Activated CD4-positive, alpha-beta T cell treated with anti-CD3 and anti-CD28 coated beads, Interleukin-2, amount 10 ng/mL, durations not matched to agents 7 days and 5 days (primary cell): ENCODE measurements at regions of chr9 and their contacts with region 1.

Region 1: DNA sequence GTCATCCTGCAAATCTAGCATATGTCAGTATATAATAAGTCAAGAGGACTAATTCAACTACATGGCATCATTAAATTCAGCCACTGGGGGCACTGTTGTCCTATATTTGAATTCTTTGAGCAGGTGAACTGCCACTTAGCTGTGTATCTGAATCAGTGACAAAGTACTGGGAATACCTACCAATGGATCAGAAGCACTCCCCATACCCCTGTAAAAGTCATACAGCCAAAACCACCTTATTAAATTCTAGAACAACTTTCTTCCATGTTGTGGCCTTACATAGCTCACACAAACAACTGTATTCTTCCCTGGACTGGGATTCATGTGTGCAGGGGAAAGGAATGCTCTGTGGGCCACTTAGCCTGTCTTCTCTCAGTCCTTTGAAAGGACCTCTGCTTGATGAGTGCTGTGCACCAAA is 57.4 kb upstream of the PLPP6 start:
- DNase-seq: peak; percentile 82
- H3K4me3 Mint-ChIP-seq: no peak overlapping the region
- H3K27ac Mint-ChIP-seq: no peak overlapping the region
- H3K4me1 Mint-ChIP-seq: peaks cover 36% of the 10 kb centered on the region
- H3K27me3 Mint-ChIP-seq: no peaks in the 10 kb centered on the region

Region 2: GRCh38 chr9:4581035-4581760 is 23.5 kb before region 1 on chr9:
- CTCF ChIA-PET with region 1: no interaction called
- POLR2A ChIA-PET with region 1: no interaction called
- DNase-seq: no peak
- H3K4me3 Mint-ChIP-seq: no peak overlapping the region
- H3K27ac Mint-ChIP-seq: no peak overlapping the region
- H3K4me1 Mint-ChIP-seq: no peaks in the 10 kb centered on the region
- H3K27me3 Mint-ChIP-seq: no peaks in the 10 kb centered on the region

Region 3: GRCh38 chr9:4622016-4622415 is 17.3 kb after region 1 on chr9:
- CTCF ChIA-PET with region 1: interaction called, 10 read pairs
- POLR2A ChIA-PET with region 1: no interaction called
- DNase-seq: no peak
- H3K4me3 Mint-ChIP-seq: no peak overlapping the region
- H3K27ac Mint-ChIP-seq: no peak overlapping the region
- H3K4me1 Mint-ChIP-seq: peaks cover 16% of the 10 kb centered on the region
- H3K27me3 Mint-ChIP-seq: peaks cover 2% of the 10 kb centered on the region